GM12878 (cell line): ENCODE measurements at regions of chr12 and their contacts with region 1.

Region 1: GRCh38 chr12:117025481-117026151 is 73.6 kb downstream of the TESC start:
- DNase-seq: no peak
- ATAC-seq: peak; percentile 97
- H3K4me3 ChIP-seq: no peak overlapping the region
- H3K27ac ChIP-seq: no peak overlapping the region
- H3K4me1 ChIP-seq: no peaks in the 10 kb centered on the region
- H3K27me3 ChIP-seq: no peaks in the 10 kb centered on the region
- CTCF ChIP-seq: peak; percentile 72 to 95 (median 78)
- EP300 ChIP-seq: no peak
- POLR2A ChIP-seq: no peak
- RAD21 ChIP-seq: peak; percentile 79

Region 2: GRCh38 chr12:116969615-116970580 is 55.7 kb before region 1 on chr12:
- CTCF ChIA-PET with region 1: no interaction called
- POLR2A ChIA-PET with region 1: no interaction called
- RAD21 ChIA-PET with region 1: no interaction called
- SMC1A ChIA-PET with region 1: no interaction called
- in situ Hi-C with region 1: no loop called
- intact Hi-C with region 1: no loop called
- DNase-seq: no peak
- ATAC-seq: no peak
- H3K4me3 ChIP-seq: no peak overlapping the region
- H3K27ac ChIP-seq: no peak overlapping the region
- H3K4me1 ChIP-seq: no peaks in the 10 kb centered on the region
- H3K27me3 ChIP-seq: no peaks in the 10 kb centered on the region
- CTCF ChIP-seq: no peak
- EP300 ChIP-seq: no peak
- POLR2A ChIP-seq: no peak
- RAD21 ChIP-seq: no peak

Region 3: DNA sequence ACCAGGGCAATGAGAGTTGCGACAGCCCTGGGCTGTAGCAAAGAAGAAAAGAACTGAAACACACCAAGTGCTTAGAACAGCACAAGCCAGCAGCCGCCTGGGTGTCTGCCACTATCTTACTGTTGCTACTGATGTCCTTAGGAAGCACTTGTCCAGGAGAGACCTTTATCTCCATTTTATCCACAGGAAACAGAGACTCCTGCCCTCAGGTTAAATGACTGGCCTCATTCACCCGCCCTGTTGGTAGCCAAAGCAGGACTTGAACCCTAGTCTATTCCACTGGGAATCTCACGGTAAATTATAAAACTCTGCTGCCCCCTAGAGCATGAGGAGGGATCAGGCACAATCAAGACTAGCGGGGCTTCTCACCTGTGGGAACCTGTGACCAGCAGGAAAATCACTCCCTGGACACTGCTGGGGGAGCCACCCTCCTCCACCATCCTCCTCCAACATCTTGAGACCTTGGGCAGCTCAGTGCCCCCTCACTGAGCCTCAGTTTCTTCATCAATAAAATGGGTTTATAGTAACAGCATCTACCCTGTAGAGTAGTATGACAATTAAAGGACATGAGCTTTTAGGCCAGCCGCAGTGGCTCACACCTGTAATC is 94.1 kb after region 1 on chr12:
- CTCF ChIA-PET with region 1: interaction called, 149 read pairs
- POLR2A ChIA-PET with region 1: interaction called, 3 read pairs
- RAD21 ChIA-PET with region 1: interaction called, 19 read pairs
- SMC1A ChIA-PET with region 1: interaction called, 15 read pairs
- in situ Hi-C with region 1: loop called (anchors 5 kb)
- intact Hi-C with region 1: loop called (anchors 1 kb)
- DNase-seq: no peak
- ATAC-seq: peak; percentile 92
- H3K4me3 ChIP-seq: no peak overlapping the region
- H3K27ac ChIP-seq: no peak overlapping the region
- H3K4me1 ChIP-seq: peaks cover 3% of the 10 kb centered on the region; the same call in 1 of the 2 replicates
- H3K27me3 ChIP-seq: no peaks in the 10 kb centered on the region
- CTCF ChIP-seq: peak; percentile 75 to 81 (median 77)
- EP300 ChIP-seq: no peak
- POLR2A ChIP-seq: no peak
- RAD21 ChIP-seq: peak; percentile 93